Activated CD8-positive, alpha-beta T cell treated with anti-CD3 and anti-CD28 coated beads for 36 hours (primary cell): ENCODE measurements at regions of chr10 and their contacts with region 1.

Region 1: GRCh38 chr10:63241841-63242281 is 108.7 kb downstream of the NRBF2 start:
- DNase-seq: no peak
- ATAC-seq: peak; percentile 29
- H3K4me3 Mint-ChIP-seq: peak overlapping the region; percentile 56
- H3K27ac Mint-ChIP-seq: peak overlapping the region; percentile 78
- H3K4me1 Mint-ChIP-seq: peaks cover 75% of the 10 kb centered on the region
- H3K27me3 Mint-ChIP-seq: no peaks in the 10 kb centered on the region
- CTCF ChIP-seq: no peak

Region 2: DNA sequence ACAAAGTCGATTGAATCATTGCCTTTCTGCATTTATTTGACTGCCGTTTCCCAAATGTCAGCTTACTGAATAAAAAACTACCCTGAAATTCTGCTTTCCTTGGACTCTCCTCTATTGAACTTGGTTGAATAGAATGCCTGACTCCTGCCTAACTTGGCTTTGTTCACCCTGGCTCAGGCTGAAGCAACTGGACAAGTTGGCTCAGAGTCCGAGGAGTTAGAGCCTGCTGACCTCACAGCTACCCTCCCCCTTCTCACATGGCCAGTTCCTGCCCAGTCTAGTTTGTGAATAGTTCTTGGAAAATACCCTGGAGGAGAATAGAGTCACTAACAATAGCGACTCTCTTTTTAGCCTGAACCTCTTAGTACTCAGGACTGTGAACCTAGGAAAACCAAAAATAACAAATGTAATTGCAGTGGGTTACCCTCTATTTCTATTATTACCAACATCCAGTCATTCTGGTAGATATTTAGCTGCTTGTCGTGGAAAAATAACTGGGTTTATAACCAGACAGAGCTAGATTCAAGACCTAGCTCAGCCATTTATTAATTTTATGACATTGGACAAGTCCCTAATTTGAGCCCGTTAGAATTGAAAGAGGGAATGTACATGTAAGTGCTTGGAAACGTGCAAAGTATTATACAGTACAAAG is 126.0 kb before region 1 on chr10:
- CTCF ChIA-PET with region 1: no interaction called
- POLR2A ChIA-PET with region 1: no interaction called
- intact Hi-C with region 1: no loop called
- DNase-seq: no peak
- ATAC-seq: no peak
- H3K4me3 Mint-ChIP-seq: no peak overlapping the region
- H3K27ac Mint-ChIP-seq: no peak overlapping the region
- H3K4me1 Mint-ChIP-seq: no peaks in the 10 kb centered on the region
- H3K27me3 Mint-ChIP-seq: no peaks in the 10 kb centered on the region
- CTCF ChIP-seq: no peak

Region 3: GRCh38 chr10:63256009-63256773 is 14.3 kb after region 1 on chr10:
- CTCF ChIA-PET with region 1: interaction called, 10 read pairs
- POLR2A ChIA-PET with region 1: interaction called, 5 read pairs
- intact Hi-C with region 1: no loop called
- DNase-seq: no peak
- ATAC-seq: no peak
- H3K4me3 Mint-ChIP-seq: no peak overlapping the region
- H3K27ac Mint-ChIP-seq: no peak overlapping the region
- H3K4me1 Mint-ChIP-seq: peaks cover 74% of the 10 kb centered on the region
- H3K27me3 Mint-ChIP-seq: no peaks in the 10 kb centered on the region
- CTCF ChIP-seq: no peak

Region 4: GRCh38 chr10:63300801-63301200 is 58.9 kb after region 1 on chr10:
- CTCF ChIA-PET with region 1: no interaction called
- POLR2A ChIA-PET with region 1: no interaction called
- intact Hi-C with region 1: no loop called
- DNase-seq: no peak
- ATAC-seq: no peak
- H3K4me3 Mint-ChIP-seq: no peak overlapping the region
- H3K27ac Mint-ChIP-seq: no peak overlapping the region
- H3K4me1 Mint-ChIP-seq: peaks cover 2% of the 10 kb centered on the region
- H3K27me3 Mint-ChIP-seq: no peaks in the 10 kb centered on the region
- CTCF ChIP-seq: no peak